AG04449 (cell line): ENCODE measurements at regions of chr1 and their contacts with region 1.

Region 1: GRCh38 chr1:36420836-36421664 is 23.3 kb upstream of the LSM10 start:
- DNase-seq: peak; percentile 26
- H3K4me3 ChIP-seq: no peak overlapping the region
- CTCF ChIP-seq: peak; percentile 99

Region 2: GRCh38 chr1:36350659-36351226 is 70.3 kb before region 1 on chr1:
- CTCF ChIA-PET with region 1: interaction called, 29 read pairs
- POLR2A ChIA-PET with region 1: no interaction called
- DNase-seq: no peak
- H3K4me3 ChIP-seq: peak overlapping the region; percentile 40
- CTCF ChIP-seq: no peak

Region 3: GRCh38 chr1:36369061-36369861 is 51.8 kb before region 1 on chr1:
- CTCF ChIA-PET with region 1: interaction called, 27 read pairs
- POLR2A ChIA-PET with region 1: no interaction called
- DNase-seq: no peak
- H3K4me3 ChIP-seq: no peak overlapping the region
- CTCF ChIP-seq: peak; percentile 92